Body of pancreas (tissue), 4 donors: ENCODE measurements at regions of chr7 and their contacts with region 1.

Region 1: GRCh38 chr7:87144173-87144657 is 8.0 kb upstream of the DMTF1 start:
- DNase-seq: no peak
- ATAC-seq: no peak
- H3K4me3 ChIP-seq: no peak overlapping the region
- H3K27ac ChIP-seq: no peak overlapping the region
- H3K4me1 ChIP-seq: no peaks in the 10 kb centered on the region
- H3K27me3 ChIP-seq: no peaks in the 10 kb centered on the region
- CTCF ChIP-seq: no peak
- POLR2A ChIP-seq: no peak

Region 2: GRCh38 chr7:86932038-86932512 is 212.1 kb before region 1 on chr7:
- intact Hi-C with region 1: loop called (anchors 5 kb)
- DNase-seq: peak in 1 of 4 donors; percentile 16
- ATAC-seq: peak; percentile 53
- H3K4me3 ChIP-seq: no peak overlapping the region
- H3K27ac ChIP-seq: peak overlapping the region in 1 of 4 donors; percentile 41
- H3K4me1 ChIP-seq: no peaks in the 10 kb centered on the region
- H3K27me3 ChIP-seq: no peaks in the 10 kb centered on the region
- CTCF ChIP-seq: no peak
- POLR2A ChIP-seq: no peak